ENCODE measurements at regions of chr16 and their contacts with region 1.

Region 1: DNA sequence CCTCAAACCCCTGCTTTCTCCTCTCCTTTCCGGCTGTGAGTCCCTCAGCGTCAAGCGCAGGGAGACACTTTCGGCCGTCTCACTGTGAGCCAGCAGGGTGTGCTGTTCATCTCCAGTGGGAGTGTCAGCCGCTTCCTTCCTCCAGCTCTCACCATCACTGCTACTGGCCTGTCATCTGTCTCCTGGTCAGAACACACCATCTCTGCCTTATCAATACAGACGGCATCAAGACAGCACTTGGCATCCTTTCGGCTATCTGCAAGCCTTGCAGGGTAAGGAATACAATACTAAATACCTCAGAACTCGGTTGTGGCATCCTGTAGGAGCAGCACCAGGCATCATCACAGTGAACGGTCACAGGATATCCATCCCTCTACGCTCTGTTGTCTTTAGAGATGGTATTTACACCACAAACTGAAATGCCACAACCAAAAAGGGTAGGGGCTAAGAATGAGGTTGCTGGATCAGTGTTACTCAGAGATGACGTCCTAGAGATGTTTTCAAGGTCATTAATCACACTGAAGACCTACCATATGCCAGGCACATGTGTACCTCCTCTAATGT is 20.7 kb upstream of the CMTM4 start:
- DNase-seq: no peak
- H3K4me3 ChIP-seq: no peak overlapping the region
- H3K27ac ChIP-seq: no peak overlapping the region
- H3K4me1 ChIP-seq: no peaks in the 10 kb centered on the region
- H3K27me3 ChIP-seq: no peaks in the 10 kb centered on the region
- CTCF ChIP-seq: peak; percentile 57 to 90 (median 88)
- EP300 ChIP-seq: no peak
- POLR2A ChIP-seq: peak in 1 of 2 experiments; percentile 58; a peak in 1 of 3 replicates
- RAD21 ChIP-seq: peak; percentile 55 to 64

Region 2: DNA sequence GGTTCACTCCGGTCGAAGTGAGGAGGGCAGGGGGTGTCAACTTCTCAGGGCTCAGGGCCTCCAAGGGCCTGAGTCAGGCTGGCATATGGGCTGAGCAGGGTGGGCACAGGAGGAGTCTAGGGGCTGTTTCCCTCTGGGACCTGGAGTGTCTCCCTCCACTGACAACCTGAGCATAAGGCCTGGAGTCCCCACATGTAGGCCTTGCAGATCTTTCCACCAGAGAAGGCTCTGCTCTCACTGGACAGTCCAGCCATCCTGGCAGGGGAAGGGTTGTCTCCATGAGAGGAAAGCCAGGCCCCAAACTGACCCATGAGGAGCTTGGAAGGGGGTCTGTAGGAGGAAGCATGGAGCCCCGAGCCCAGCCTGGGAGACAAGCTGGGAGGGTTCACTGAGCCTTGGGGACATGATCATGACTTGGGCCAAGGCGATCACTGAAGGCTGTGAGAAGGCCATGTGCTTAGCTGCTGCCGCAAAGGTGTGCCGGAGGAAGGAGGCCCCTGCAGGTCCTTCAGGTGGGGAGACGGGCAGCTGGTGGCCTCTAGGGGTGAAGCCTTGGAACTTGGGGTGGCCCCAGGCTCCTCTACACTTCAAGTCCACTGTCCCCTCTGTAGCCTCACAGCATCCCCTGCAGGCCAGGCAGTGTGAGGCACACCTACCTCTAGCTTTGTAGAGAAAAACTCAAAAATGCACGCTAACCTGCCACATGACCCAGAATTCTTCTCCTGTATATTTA is 128.0 kb before region 1 on chr16:
- CTCF ChIA-PET with region 1: no interaction called
- POLR2A ChIA-PET with region 1: no interaction called
- DNase-seq: peak in 1 of 2 experiments; percentile 73
- H3K4me3 ChIP-seq: no peak overlapping the region
- H3K27ac ChIP-seq: no peak overlapping the region
- H3K4me1 ChIP-seq: no peaks in the 10 kb centered on the region
- H3K27me3 ChIP-seq: no peaks in the 10 kb centered on the region
- CTCF ChIP-seq: peak; percentile 89 to 99 (median 94)
- EP300 ChIP-seq: no peak
- POLR2A ChIP-seq: no peak
- RAD21 ChIP-seq: peak; percentile 93 to 94

Region 3: DNA sequence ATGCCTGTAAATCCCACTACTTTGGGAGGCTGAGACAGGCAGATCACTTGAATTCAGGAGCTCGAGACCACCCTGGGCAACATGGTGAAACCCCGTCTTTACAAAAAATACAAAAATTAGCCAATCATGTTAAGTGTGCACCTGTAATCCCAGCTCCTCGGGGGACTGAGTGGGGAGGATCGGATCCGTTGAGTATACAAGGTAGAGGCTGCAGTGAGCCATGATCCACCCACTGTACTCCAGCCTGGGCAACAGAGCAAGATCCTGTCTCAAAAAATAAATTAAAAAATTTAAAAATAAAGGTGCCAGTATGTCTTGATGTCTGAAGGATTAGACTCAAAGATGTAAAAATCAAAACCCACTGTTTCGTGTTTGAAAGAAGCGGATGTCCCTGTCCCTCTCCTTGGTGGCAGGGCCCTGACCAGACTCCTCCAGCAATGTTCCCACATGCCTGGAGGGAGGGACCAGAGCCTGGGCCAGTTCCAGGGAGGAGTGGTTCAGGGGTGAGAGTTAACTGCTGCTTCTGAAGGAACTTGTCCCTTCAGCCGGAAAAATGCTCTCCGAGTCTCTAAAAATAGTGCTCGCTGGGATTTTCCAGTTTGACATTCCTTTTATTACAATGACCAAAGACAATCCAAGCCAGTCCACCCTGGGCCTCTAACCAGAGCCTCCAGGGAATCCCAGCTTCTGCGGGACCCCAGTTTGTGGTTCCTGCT is 11.2 kb before region 1 on chr16:
- CTCF ChIA-PET with region 1: interaction called, 15 read pairs
- POLR2A ChIA-PET with region 1: interaction called, 11 read pairs
- DNase-seq: no peak
- H3K4me3 ChIP-seq: no peak overlapping the region
- H3K27ac ChIP-seq: no peak overlapping the region
- H3K4me1 ChIP-seq: peaks cover 0 to 4% (median 1%) of the 10 kb centered on the region in 4 experiments; a peak in 2 of 7 replicates
- H3K27me3 ChIP-seq: no peaks in the 10 kb centered on the region
- CTCF ChIP-seq: no peak
- EP300 ChIP-seq: no peak
- POLR2A ChIP-seq: no peak
- RAD21 ChIP-seq: no peak

Region 4: GRCh38 chr16:66728117-66728787 is 11.1 kb after region 1 on chr16:
- CTCF ChIA-PET with region 1: interaction called, 35 read pairs
- POLR2A ChIA-PET with region 1: interaction called, 8 read pairs
- DNase-seq: no peak
- H3K4me3 ChIP-seq: no peak overlapping the region
- H3K27ac ChIP-seq: no peak overlapping the region; the same call in 1 of the 2 replicates
- H3K4me1 ChIP-seq: peaks cover 0 to 6% (median 5%) of the 10 kb centered on the region in 4 experiments; a peak in 6 of 7 replicates
- H3K27me3 ChIP-seq: no peaks in the 10 kb centered on the region
- CTCF ChIP-seq: peak in 2 of 3 experiments; percentile 52 to 58; a peak in 3 of 4 replicates
- EP300 ChIP-seq: no peak
- POLR2A ChIP-seq: no peak
- RAD21 ChIP-seq: peak; percentile 37 to 50

Region 5: DNA sequence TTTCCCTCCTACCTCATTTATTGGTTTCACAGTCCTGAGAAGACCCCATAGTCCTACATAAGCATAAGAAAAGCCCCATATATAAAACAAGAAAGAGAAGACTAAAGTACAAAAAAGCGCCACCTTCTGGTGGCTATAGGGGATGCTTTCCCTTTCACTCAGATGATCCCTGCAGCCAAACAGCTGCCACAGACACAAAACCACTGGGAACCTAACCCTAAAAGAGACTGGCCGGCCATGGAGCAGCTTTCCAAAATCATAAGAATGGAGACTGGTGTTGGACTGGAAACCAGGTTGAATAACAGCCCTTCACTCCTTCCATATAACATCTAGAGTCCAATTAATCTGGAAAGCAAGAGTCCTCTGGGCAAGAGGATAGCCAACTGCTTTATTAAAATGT is 22.8 kb after region 1 on chr16:
- CTCF ChIA-PET with region 1: interaction called, 13 read pairs
- POLR2A ChIA-PET with region 1: interaction called, 9 read pairs
- DNase-seq: no peak
- H3K4me3 ChIP-seq: no peak overlapping the region
- H3K27ac ChIP-seq: no peak overlapping the region
- H3K4me1 ChIP-seq: peaks cover 0 to 8% (median 5%) of the 10 kb centered on the region in 4 experiments; a peak in 3 of 7 replicates
- H3K27me3 ChIP-seq: no peaks in the 10 kb centered on the region
- CTCF ChIP-seq: peak; percentile 29 to 60 (median 47); a peak in 3 of 4 replicates
- EP300 ChIP-seq: no peak
- POLR2A ChIP-seq: no peak
- RAD21 ChIP-seq: peak; percentile 12 to 25; a peak in 1 of 4 replicates

Region 6: GRCh38 chr16:66751303-66751991 is 34.3 kb after region 1 on chr16 and contains the start of gene DYNC1LI2:
- CTCF ChIA-PET with region 1: interaction called, 3 read pairs
- POLR2A ChIA-PET with region 1: interaction called, 11 read pairs
- DNase-seq: peak in 1 of 2 experiments; percentile 92
- H3K4me3 ChIP-seq: peak within 1 kb of the TSS; percentile 74 to 98 (median 95)
- H3K27ac ChIP-seq: peak within 1 kb of the TSS; percentile 99
- H3K4me1 ChIP-seq: peaks cover 3 to 9% (median 6%) of the 10 kb centered on the region in 4 experiments; a peak in 6 of 7 replicates
- H3K27me3 ChIP-seq: peaks cover 0 to 2% (median 0%) of the 10 kb centered on the region in 4 experiments; a peak in 1 of 7 replicates
- CTCF ChIP-seq: peak; percentile 71 to 96 (median 74)
- EP300 ChIP-seq: no peak
- POLR2A ChIP-seq: peak; percentile 63 to 71
- RAD21 ChIP-seq: peak; percentile 11 to 43; a peak in 2 of 4 replicates
- total RNA-seq, gene DYNC1LI2: 70.8 and 72.4 TPM in 2 replicates

Region 7: GRCh38 chr16:66850115-66850815 is 133.1 kb after region 1 on chr16:
- CTCF ChIA-PET with region 1: no interaction called
- POLR2A ChIA-PET with region 1: no interaction called
- DNase-seq: no peak
- H3K4me3 ChIP-seq: no peak overlapping the region
- H3K27ac ChIP-seq: no peak overlapping the region
- H3K4me1 ChIP-seq: peaks cover 0 to 2% (median 0%) of the 10 kb centered on the region in 4 experiments; a peak in 1 of 7 replicates
- H3K27me3 ChIP-seq: peaks cover 7 to 19% (median 12%) of the 10 kb centered on the region in 4 experiments
- CTCF ChIP-seq: no peak
- EP300 ChIP-seq: no peak
- POLR2A ChIP-seq: no peak
- RAD21 ChIP-seq: no peak

Measured in H1 (cell line).